ENCODE measurements at regions of chr2 and their contacts with region 1.

Region 1: GRCh38 chr2:4588606-4589005 is 885.2 kb downstream of the DCDC2C start:
- DNase-seq: no peak
- ATAC-seq: no peak

Region 2: DNA sequence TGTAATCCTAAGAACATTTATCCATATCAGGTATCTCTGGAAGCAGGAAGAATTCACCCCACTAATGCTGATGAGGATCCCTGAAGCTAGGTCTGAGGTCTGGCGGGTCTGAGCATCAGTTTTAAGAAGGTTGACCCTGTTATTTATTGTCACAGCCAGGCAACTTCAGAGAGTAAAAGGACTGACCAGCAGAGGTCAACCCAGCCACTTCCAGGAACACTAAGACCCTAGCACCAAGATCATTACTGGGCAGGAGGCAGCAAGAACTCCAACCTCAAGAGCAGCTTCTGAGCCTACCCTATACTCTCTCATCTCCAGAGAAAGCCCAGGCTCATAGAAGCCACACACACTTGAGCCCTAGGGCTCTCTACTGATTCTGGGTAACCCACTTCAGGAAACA is 16.2 kb after region 1 on chr2:
- intact Hi-C with region 1: loop called (anchors 1 kb)
- DNase-seq: no peak
- ATAC-seq: no peak

Measured in sciatic nerve (tissue), 2 donors.